ENCODE measurements at regions of chr18 and their contacts with region 1.

Region 1: GRCh38 chr18:9066817-9067306 is 35.6 kb upstream of the NDUFV2 start:
- DNase-seq: no peak
- ATAC-seq: no peak
- H3K4me3 ChIP-seq: no peak overlapping the region
- H3K27ac ChIP-seq: no peak overlapping the region
- H3K4me1 ChIP-seq: peaks cover 0 to 37% (median 0%) of the 10 kb centered on the region in 12 donors
- H3K27me3 ChIP-seq: no peaks in the 10 kb centered on the region
- CTCF ChIP-seq: no peak
- POLR2A ChIP-seq: no peak

Region 2: GRCh38 chr18:8704361-8705279 is 362.2 kb before region 1 on chr18:
- intact Hi-C with region 1: loop called in 1 of 10 experiments (anchors 10 kb)
- DNase-seq: peak; percentile 90 to 95 (median 92)
- ATAC-seq: peak; percentile 92 to 96 (median 95)
- H3K4me3 ChIP-seq: peak overlapping the region; percentile 44 to 95 (median 70)
- H3K27ac ChIP-seq: peak overlapping the region; percentile 76 to 95 (median 90)
- H3K4me1 ChIP-seq: peaks cover 0 to 31% (median 18%) of the 10 kb centered on the region in 12 donors
- H3K27me3 ChIP-seq: peaks cover 0 to 35% (median 0%) of the 10 kb centered on the region in 9 donors
- CTCF ChIP-seq: peak in 2 of 12 donors; percentile 6 to 8
- POLR2A ChIP-seq: peak in 1 of 2 donors; percentile 68

Region 3: GRCh38 chr18:8960740-8961657 is 105.9 kb before region 1 on chr18:
- intact Hi-C with region 1: no loop called
- DNase-seq: no peak
- ATAC-seq: no peak
- H3K4me3 ChIP-seq: no peak overlapping the region
- H3K27ac ChIP-seq: no peak overlapping the region
- H3K4me1 ChIP-seq: no peaks in the 10 kb centered on the region
- H3K27me3 ChIP-seq: peaks cover 0 to 9% (median 0%) of the 10 kb centered on the region in 9 donors
- CTCF ChIP-seq: no peak
- POLR2A ChIP-seq: no peak